GM13976 (cell line): ENCODE measurements at regions of chr6 and their contacts with region 1.

Region 1: GRCh38 chr6:158711264-158711663 is 61.4 kb downstream of the SYTL3 start:
- DNase-seq: no peak
- CTCF ChIP-seq: no peak

Region 2: DNA sequence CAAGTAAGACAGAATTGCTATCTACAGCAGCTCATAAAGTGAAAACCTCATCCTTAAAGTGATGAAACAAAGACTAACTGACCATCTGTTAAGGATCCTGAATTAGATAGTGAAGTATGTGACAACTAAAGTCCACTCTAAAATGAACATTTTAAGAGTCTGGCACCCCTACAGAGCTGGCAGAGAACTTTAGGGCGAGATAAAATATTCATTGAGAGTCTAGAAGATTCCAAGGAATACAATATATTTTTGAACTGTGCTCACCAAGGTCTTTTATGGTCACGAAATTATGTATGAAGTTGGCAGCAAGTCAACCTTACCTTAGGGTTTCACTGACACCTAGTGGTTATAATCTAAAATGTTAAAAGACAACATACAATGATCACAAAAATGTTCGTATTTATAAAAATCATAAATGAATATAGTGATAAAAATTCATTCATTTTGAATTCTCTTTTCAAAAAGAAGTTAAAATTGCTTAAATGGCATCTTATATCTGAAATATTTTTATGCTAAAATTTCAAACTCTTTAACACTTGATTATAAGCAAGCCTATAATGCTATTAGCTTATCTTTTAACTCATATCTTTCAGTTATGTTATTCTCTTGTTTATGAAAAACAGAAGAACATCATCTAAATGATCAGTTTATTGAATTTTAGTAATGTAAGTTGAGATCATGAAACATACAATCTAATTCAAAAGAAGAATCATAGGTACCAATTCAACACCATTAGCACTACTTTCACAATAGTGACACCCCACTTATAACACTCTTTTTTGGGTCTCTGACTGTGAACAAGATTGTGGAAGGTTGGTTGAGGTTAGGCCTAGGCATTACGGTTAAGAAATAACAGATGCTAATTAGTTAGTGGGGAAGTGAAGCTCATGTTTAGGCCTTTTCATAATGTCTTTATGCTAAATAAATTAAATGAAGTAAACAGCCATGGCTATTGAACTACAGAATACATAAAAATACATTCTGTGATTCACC is 261.3 kb after region 1 on chr6:
- in situ Hi-C with region 1: loop called (anchors 5 kb)
- DNase-seq: peak; percentile 53
- CTCF ChIP-seq: peak; percentile 27